ENCODE measurements at regions of chr15 and their contacts with region 1.

Region 1: GRCh38 chr15:59221511-59222505 is 15.2 kb downstream of the LDHAL6B start:
- DNase-seq: no peak
- CTCF ChIP-seq: no peak

Region 2: GRCh38 chr15:58999694-59000093 is 222.1 kb before region 1 on chr15:
- CTCF ChIA-PET with region 1: no interaction called
- POLR2A ChIA-PET with region 1: no interaction called
- DNase-seq: no peak
- CTCF ChIP-seq: no peak

Region 3: GRCh38 chr15:59205839-59206622 is 15.8 kb before region 1 on chr15:
- CTCF ChIA-PET with region 1: interaction called, 10 read pairs
- POLR2A ChIA-PET with region 1: no interaction called
- DNase-seq: peak; percentile 26
- CTCF ChIP-seq: no peak

Region 4: DNA sequence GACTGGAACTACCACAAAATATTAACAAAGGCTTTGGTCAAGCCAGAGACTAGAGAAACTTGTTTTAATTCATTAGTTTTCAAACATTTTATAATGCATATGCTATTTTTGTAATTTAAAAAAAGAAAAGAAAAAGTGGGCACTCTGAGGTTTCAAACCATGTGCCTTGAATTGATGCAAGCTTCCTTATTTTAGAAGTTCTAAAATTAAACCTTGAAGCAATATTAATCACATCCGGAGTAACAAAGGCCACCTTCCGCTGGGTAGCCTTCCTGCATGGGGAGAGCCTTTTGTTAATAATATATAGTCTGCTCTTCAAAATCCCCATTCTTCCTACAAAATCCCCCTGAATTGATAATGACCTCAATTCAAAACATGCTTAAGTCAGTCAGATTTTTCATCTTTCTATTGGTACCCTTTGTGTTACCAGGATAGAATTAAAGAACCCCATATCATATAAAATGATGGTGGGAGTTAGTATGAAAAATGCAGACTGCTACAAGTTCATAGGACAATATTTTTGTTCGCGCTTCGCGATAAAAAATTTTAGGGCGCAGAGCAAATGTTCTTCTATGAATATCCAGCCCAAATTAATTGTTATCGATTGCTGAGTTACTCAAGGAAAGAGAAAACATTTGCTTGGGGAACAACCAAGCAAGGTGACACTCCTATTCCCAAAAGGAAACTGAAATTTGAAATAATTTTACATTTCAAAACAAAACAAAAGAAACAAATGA is 15.5 kb after region 1 on chr15:
- CTCF ChIA-PET with region 1: interaction called, 13 read pairs
- POLR2A ChIA-PET with region 1: no interaction called
- DNase-seq: peak; percentile 50
- CTCF ChIP-seq: no peak